ENCODE measurements at regions of chr17 and their contacts with region 1.

Region 1: DNA sequence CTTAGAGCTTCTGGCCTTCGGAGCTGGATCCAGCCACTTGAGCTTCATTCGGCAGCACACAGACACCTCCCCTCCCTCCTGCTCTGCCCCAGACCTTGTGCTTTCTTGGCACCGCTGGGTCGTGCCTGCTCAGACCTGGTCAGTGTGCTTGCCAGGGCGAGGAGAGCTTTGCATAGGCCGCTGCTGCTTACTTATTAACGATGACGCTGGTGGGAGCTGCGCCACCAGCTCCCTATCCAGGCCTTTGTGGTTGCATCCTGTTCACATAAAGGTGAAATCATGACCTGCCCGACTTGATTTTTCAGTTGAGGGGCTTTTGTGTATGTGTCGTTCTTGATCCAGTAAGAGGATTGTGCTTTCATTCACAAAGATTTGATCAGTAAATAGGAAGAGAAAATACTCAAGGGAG is 101.1 kb downstream of the MSI2 start:
- DNase-seq: no peak
- ATAC-seq: peak; percentile 20
- H3K4me3 Mint-ChIP-seq: no peak overlapping the region
- H3K27ac Mint-ChIP-seq: no peak overlapping the region
- H3K4me1 Mint-ChIP-seq: peaks cover 55% of the 10 kb centered on the region
- H3K27me3 Mint-ChIP-seq: no peaks in the 10 kb centered on the region

Region 2: GRCh38 chr17:57408071-57408811 is 50.8 kb after region 1 on chr17:
- CTCF ChIA-PET with region 1: interaction called, 3 read pairs
- POLR2A ChIA-PET with region 1: no interaction called
- intact Hi-C with region 1: loop called in 1 of 2 experiments (anchors 5 kb)
- DNase-seq: peak; percentile 72
- ATAC-seq: peak; percentile 82
- H3K4me3 Mint-ChIP-seq: peak overlapping the region; percentile 7
- H3K27ac Mint-ChIP-seq: peak overlapping the region; percentile 44
- H3K4me1 Mint-ChIP-seq: peaks cover 40% of the 10 kb centered on the region
- H3K27me3 Mint-ChIP-seq: no peaks in the 10 kb centered on the region